Naive thymus-derived CD4-positive, alpha-beta T cell (primary cell): ENCODE measurements at regions of chr3 and their contacts with region 1.

Region 1: GRCh38 chr3:189148081-189148507 is 23.7 kb upstream of the TPRG1 start:
- DNase-seq: peak; percentile 22 to 61 (median 51)
- ATAC-seq: peak; percentile 85
- H3K4me3 ChIP-seq: no peak overlapping the region
- H3K4me3 Mint-ChIP-seq: no peak overlapping the region
- H3K27ac ChIP-seq: no peak overlapping the region
- H3K27ac Mint-ChIP-seq: peak overlapping the region in 1 of 9 donors; percentile 21
- H3K4me1 ChIP-seq: peaks cover 0 to 16% of the 10 kb centered on the region in 2 donors
- H3K4me1 Mint-ChIP-seq: peaks cover 6 to 35% (median 8%) of the 10 kb centered on the region in 7 donors
- H3K27me3 ChIP-seq: no peaks in the 10 kb centered on the region
- H3K27me3 Mint-ChIP-seq: peaks cover 0 to 20% (median 0%) of the 10 kb centered on the region in 5 donors

Region 2: GRCh38 chr3:188358787-188359493 is 789.2 kb before region 1 on chr3:
- CTCF ChIA-PET with region 1: no interaction called
- POLR2A ChIA-PET with region 1: no interaction called
- intact Hi-C with region 1: loop called in 1 of 2 experiments (anchors 10 kb)
- DNase-seq: peak in 7 of 9 donors; percentile 11 to 56 (median 44)
- ATAC-seq: peak; percentile 85
- H3K4me3 ChIP-seq: peak overlapping the region; percentile 8
- H3K4me3 Mint-ChIP-seq: peak overlapping the region; percentile 53 to 82 (median 69)
- H3K27ac ChIP-seq: peak overlapping the region; percentile 45
- H3K27ac Mint-ChIP-seq: peak overlapping the region; percentile 31 to 95 (median 82)
- H3K4me1 ChIP-seq: peaks cover 31 to 32% of the 10 kb centered on the region in 2 donors
- H3K4me1 Mint-ChIP-seq: peaks cover 31 to 58% (median 47%) of the 10 kb centered on the region in 7 donors
- H3K27me3 ChIP-seq: no peaks in the 10 kb centered on the region
- H3K27me3 Mint-ChIP-seq: peaks cover 0 to 4% (median 0%) of the 10 kb centered on the region in 5 donors

Region 3: GRCh38 chr3:188749010-188749617 is 399.0 kb before region 1 on chr3:
- CTCF ChIA-PET with region 1: interaction called, 3 read pairs
- POLR2A ChIA-PET with region 1: no interaction called
- intact Hi-C with region 1: loop called (anchors 1 kb)
- DNase-seq: peak in 8 of 9 donors; percentile 25 to 62 (median 46)
- ATAC-seq: peak; percentile 82
- H3K4me3 ChIP-seq: no peak overlapping the region
- H3K4me3 Mint-ChIP-seq: no peak overlapping the region
- H3K27ac ChIP-seq: no peak overlapping the region
- H3K27ac Mint-ChIP-seq: no peak overlapping the region
- H3K4me1 ChIP-seq: no peaks in the 10 kb centered on the region
- H3K4me1 Mint-ChIP-seq: peaks cover 0 to 17% (median 0%) of the 10 kb centered on the region in 7 donors
- H3K27me3 ChIP-seq: no peaks in the 10 kb centered on the region
- H3K27me3 Mint-ChIP-seq: no peaks in the 10 kb centered on the region

Region 4: DNA sequence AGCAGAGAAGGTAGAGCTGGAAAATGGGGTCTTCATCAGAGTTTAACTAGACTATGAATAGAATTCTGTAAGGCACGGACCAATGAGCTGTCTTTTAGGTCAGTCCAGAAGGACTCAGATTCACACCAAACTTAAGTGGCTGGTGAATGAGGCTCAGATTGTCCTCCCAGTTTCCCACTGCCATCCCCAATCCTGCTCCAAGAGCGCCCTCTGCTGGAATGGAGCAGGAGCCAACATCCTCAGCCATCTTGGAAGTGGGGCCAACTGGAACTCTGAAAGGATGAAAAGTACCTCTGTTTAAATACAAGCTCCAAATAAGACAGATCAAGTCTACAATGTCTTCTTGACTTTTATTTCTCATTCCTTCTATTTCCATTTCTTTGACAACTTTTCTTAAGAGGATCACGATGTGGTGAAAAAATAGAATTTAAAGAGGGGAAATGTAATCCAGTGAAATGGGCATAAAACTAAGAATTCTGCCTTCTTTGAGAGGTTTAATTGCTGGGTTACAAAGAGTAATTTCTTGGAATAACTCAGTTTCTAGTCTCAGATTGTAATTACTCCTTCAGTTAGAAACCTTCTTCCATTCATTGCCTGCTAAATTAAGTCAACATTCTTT is 193.4 kb before region 1 on chr3:
- CTCF ChIA-PET with region 1: interaction called, 28 read pairs
- POLR2A ChIA-PET with region 1: interaction called, 5 read pairs
- intact Hi-C with region 1: loop called (anchors 1 kb)
- DNase-seq: peak; percentile 35 to 80 (median 63)
- ATAC-seq: peak; percentile 83
- H3K4me3 ChIP-seq: no peak overlapping the region
- H3K4me3 Mint-ChIP-seq: no peak overlapping the region
- H3K27ac ChIP-seq: no peak overlapping the region
- H3K27ac Mint-ChIP-seq: no peak overlapping the region
- H3K4me1 ChIP-seq: no peaks in the 10 kb centered on the region
- H3K4me1 Mint-ChIP-seq: peaks cover 0 to 30% (median 0%) of the 10 kb centered on the region in 7 donors
- H3K27me3 ChIP-seq: no peaks in the 10 kb centered on the region
- H3K27me3 Mint-ChIP-seq: peaks cover 0 to 5% (median 0%) of the 10 kb centered on the region in 5 donors